ENCODE measurements at regions of chr6 and their contacts with region 1.

Region 1: DNA sequence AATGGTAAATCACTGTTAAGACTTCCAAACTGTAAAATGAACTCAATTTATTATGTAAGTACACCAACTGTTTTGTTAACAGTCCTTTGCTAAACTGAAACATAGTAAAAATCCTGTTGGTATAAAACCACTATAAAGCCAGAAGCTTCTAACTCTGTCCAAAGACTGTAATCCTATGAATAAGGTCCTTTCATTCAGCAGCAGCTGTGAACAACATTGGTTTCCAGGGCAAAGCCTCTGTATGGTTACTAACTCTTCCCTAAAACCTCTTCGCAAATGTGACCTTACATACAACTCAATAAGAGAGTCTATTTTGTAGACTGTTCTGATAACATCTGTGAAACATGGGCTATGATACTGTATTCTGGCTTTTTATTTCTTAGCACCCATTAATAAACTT is 40.1 kb downstream of the NUP153 start:
- DNase-seq: no peak
- ATAC-seq: no peak

Region 2: GRCh38 chr6:17771609-17772008 is 105.0 kb after region 1 on chr6:
- intact Hi-C with region 1: loop called in 1 of 2 experiments (anchors 10 kb)
- DNase-seq: no peak
- ATAC-seq: no peak

Region 3: DNA sequence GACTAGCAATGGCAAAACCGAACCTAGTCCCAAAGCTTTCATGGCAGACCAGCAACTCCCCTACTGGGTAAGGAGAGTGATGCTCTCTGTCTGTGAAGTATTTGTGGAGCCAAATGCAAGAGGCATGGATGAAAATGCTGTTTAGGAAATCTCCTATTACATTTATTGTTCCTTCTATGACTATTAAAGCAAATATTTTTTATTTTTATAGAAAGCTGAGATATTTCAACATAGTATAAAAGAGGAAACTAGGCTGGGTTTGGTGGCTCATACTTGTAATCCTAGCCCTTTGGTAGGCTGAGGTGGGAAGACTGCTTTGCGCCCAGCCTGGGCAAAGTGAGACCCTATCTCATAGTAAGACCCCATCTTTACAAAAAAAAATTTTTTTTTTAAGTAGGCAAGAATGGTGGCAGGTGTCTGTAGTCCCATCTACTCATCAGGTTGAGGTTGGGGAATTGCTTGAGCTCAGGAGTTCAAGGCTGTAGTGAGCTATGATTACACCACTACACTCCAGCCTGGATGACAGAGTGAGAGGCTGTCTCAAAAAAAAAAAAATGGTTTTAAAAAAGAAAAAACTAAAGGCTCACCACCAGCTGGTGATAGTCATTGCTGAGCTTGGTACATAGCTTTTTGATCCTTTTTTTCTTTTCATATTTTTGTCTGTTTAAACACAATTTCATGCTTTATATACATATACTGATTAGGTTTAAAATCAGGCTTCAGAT is 499.8 kb after region 1 on chr6:
- intact Hi-C with region 1: no loop called
- DNase-seq: no peak
- ATAC-seq: no peak

Region 4: GRCh38 chr6:18823782-18824386 is 1157.2 kb after region 1 on chr6:
- intact Hi-C with region 1: no loop called
- DNase-seq: no peak
- ATAC-seq: no peak

Measured in left cardiac atrium (tissue), 4 donors.